ENCODE measurements at regions of chr19 and their contacts with region 1.

Region 1: DNA sequence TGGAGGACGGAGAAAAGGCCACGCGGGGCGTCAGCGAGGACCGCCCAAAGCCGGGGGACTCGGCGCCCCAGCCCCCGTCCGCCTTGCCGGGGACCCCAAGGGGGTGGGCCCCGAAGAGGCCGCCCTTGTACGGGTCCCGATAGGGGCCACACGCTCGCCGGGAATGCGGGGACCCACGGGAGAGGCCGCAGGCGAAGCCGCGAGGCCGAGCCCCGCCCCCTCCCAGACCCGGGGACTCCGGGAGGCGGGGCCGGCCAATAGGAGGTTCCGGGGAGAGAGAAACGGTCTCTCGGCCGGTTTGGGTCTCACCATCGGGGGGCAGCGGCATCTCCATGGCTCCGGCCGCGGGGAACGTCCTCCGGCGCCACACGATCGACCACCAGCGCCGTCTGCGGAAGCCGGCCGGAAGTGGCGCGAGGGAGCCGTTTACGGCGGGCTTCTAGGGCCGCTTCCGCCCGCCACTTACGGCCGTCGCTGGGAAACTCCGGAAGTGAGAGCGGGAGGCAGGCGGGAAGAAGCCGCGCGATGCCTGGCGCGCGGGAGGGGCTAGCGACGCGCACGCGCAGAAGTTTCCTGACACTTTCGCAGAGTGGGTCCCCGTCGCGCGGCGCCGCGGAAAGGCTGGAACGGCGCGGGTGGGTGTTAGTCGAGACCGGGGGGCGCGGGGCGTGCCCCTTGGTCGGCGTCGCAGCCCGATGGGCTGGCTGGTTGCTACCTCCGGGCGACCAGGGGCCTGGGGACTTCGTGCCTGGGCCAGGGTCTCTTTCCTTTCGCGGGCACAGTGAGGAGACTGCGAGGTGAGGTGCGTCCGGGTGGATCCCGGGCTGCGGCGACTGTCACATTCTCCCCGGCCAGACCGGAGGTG is at the start of gene CHERP:
- DNase-seq: peak; percentile 89 to 98 (median 96)
- ATAC-seq: peak; percentile 88
- H3K4me3 ChIP-seq: peak within 1 kb of the TSS; percentile 63 to 79
- H3K4me3 Mint-ChIP-seq: peak within 1 kb of the TSS; percentile 84
- H3K27ac ChIP-seq: peak within 1 kb of the TSS; percentile 69 to 81
- H3K27ac Mint-ChIP-seq: peak within 1 kb of the TSS; percentile 90
- H3K4me1 ChIP-seq: peaks cover 56% of the 10 kb centered on the region
- H3K4me1 Mint-ChIP-seq: peaks cover 55% of the 10 kb centered on the region
- H3K27me3 ChIP-seq: no peaks in the 10 kb centered on the region
- H3K27me3 Mint-ChIP-seq: no peaks in the 10 kb centered on the region
- CTCF ChIP-seq: no peak
- total RNA-seq, gene CHERP: 68.7 to 68.9 TPM

Region 2: GRCh38 chr19:16495982-16496612 is 46.2 kb before region 1 on chr19 and contains the starts of genes C19orf44 and CALR3:
- CTCF ChIA-PET with region 1: no interaction called
- POLR2A ChIA-PET with region 1: no interaction called
- intact Hi-C with region 1: loop called (anchors 1 kb)
- DNase-seq: peak; percentile 92 to 98 (median 96)
- ATAC-seq: peak; percentile 99
- H3K4me3 ChIP-seq: peak within 1 kb of the TSS; percentile 66 to 89
- H3K4me3 Mint-ChIP-seq: peak within 1 kb of the TSS; percentile 94
- H3K27ac ChIP-seq: peak within 1 kb of the TSS; percentile 67 to 73
- H3K27ac Mint-ChIP-seq: peak within 1 kb of the TSS; percentile 86
- H3K4me1 ChIP-seq: peaks cover 11% of the 10 kb centered on the region
- H3K4me1 Mint-ChIP-seq: peaks cover 14% of the 10 kb centered on the region
- H3K27me3 ChIP-seq: no peaks in the 10 kb centered on the region
- H3K27me3 Mint-ChIP-seq: no peaks in the 10 kb centered on the region
- CTCF ChIP-seq: no peak
- total RNA-seq, gene C19orf44: 0.52 to 0.61 TPM
- total RNA-seq, gene CALR3: not detected

Region 3: DNA sequence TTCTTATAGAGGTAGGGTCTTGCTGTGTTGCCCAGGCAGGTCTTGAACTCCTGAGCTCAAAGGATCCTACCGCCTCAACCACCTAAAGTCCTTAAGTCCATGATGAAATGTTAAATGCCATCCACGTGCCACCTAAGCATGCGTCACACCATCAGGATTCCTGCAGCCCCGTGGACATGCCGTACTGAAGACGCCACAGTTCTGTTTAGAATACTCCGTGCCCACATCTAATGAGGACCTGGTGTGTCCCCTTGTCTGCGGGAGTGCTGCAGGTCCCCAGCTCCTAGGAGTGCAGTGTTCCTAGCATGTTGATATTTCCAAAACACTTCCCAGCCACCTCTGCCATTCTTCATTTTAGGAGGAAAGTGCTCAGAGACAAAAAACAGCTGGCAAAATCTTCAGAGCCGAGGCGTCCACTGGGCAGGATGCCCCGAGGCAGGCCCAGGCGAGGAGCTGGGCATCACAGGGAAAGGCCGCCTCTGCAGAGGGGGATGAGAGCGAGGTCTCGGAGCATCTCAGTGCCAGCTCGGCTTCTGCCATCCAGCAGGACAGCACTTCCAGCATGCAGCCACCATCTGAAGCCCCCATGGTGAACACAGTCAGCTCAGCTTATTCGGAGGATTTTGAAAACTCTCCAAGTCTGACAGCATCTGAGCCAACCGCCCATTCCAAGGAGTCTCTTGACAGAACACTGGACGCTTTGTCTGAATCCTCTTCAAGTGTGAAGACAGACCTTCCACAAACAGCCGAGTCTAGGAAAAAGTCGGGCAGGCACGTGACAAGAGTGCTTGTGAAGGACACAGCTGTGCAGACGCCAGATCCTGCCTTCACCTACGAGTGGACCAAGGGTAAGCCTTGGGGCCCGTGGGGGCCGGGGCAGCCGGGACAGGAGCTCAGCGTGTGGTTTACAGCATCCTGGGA is 32.9 kb before region 1 on chr19:
- CTCF ChIA-PET with region 1: no interaction called
- POLR2A ChIA-PET with region 1: no interaction called
- intact Hi-C with region 1: no loop called
- DNase-seq: no peak
- ATAC-seq: no peak
- H3K4me3 ChIP-seq: no peak overlapping the region
- H3K4me3 Mint-ChIP-seq: no peak overlapping the region
- H3K27ac ChIP-seq: no peak overlapping the region
- H3K27ac Mint-ChIP-seq: no peak overlapping the region
- H3K4me1 ChIP-seq: no peaks in the 10 kb centered on the region
- H3K4me1 Mint-ChIP-seq: no peaks in the 10 kb centered on the region
- H3K27me3 ChIP-seq: no peaks in the 10 kb centered on the region
- H3K27me3 Mint-ChIP-seq: no peaks in the 10 kb centered on the region
- CTCF ChIP-seq: no peak

Region 4: GRCh38 chr19:16572332-16573211 is 30.3 kb after region 1 on chr19 and contains the start of gene SLC35E1:
- CTCF ChIA-PET with region 1: no interaction called
- POLR2A ChIA-PET with region 1: interaction called, 9 read pairs
- intact Hi-C with region 1: loop called (anchors 1 kb)
- DNase-seq: peak; percentile 80 to 96 (median 89)
- ATAC-seq: peak; percentile 91
- H3K4me3 ChIP-seq: peak within 1 kb of the TSS; percentile 80 to 99
- H3K4me3 Mint-ChIP-seq: peak within 1 kb of the TSS; percentile 95
- H3K27ac ChIP-seq: peak within 1 kb of the TSS; percentile 92 to 99
- H3K27ac Mint-ChIP-seq: peak within 1 kb of the TSS; percentile 99
- H3K4me1 ChIP-seq: peaks cover 34% of the 10 kb centered on the region
- H3K4me1 Mint-ChIP-seq: peaks cover 50% of the 10 kb centered on the region
- H3K27me3 ChIP-seq: no peaks in the 10 kb centered on the region
- H3K27me3 Mint-ChIP-seq: no peaks in the 10 kb centered on the region
- CTCF ChIP-seq: no peak
- total RNA-seq, gene SLC35E1: 92.3 to 95.4 TPM

Region 5: DNA sequence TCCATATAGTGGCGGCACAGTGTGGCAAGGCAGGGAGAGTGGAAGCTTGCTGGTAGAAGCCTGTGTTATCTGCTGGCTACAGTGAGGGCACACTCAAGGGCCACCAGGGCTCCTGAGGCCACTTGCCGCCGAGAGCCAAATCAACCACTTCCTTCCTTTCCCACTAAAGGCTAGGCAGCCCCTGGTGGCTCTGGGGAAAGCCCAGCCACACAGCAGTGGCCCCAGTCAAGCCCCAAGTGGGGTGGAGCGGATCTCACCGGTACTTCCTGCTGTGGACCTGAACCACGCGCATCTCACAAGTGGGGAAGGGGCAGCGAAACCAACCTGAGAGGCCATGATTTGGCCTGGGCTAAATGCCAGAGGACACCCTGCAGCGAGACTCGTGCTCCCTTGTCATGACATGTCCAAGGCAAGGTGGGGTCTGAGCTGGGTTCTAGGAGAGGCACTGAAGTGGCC is 51.9 kb after region 1 on chr19:
- CTCF ChIA-PET with region 1: no interaction called
- POLR2A ChIA-PET with region 1: no interaction called
- intact Hi-C with region 1: loop called in 1 of 2 experiments (anchors 1 kb)
- DNase-seq: peak in 6 of 9 experiments; percentile 28 to 87 (median 53)
- ATAC-seq: peak; percentile 55
- H3K4me3 ChIP-seq: peak overlapping the region; percentile 28 to 54
- H3K4me3 Mint-ChIP-seq: peak overlapping the region; percentile 74
- H3K27ac ChIP-seq: peak overlapping the region; percentile 53 to 70
- H3K27ac Mint-ChIP-seq: peak overlapping the region; percentile 93
- H3K4me1 ChIP-seq: peaks cover 54% of the 10 kb centered on the region
- H3K4me1 Mint-ChIP-seq: peaks cover 73% of the 10 kb centered on the region
- H3K27me3 ChIP-seq: no peaks in the 10 kb centered on the region
- H3K27me3 Mint-ChIP-seq: no peaks in the 10 kb centered on the region
- CTCF ChIP-seq: no peak